Dorsolateral prefrontal cortex (tissue), 120 donors: ENCODE measurements at regions of chr2 and their contacts with region 1.

Region 1: DNA sequence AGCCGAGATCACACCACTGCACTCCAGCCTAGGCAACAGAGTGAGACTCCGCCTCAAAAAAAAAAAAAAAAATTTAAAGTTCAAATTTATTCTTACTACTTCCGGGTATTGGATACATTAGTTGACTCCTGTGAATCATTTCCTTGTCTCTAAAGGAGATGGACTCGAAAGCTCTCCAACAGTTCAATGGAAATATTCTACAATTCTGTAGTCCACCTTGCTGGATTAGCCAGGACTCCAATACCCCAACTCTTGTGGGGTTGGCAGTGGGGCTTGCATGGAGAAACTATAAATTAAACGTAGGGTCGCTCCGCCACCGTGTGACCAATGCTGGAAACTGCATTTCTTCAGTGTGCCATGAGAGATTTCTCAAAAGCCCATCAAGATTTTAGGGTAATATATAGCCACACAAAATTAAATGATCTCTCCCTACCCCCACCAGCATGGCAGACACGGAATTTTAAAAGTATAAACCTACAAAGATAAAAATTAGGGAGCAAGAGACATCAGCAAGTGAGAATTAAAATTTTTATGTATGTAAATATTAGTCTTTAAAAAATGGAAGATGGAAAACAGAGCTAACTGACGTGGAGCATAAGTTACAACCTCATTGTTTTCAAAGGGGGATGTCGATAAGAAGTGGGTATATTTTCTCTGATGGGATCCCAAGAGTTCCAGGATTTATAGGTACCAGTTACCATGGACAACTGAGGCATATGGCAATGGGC is 27.8 kb upstream of the GAREM2 start:
- DNase-seq: peak; percentile 47 to 82 (median 66)
- H3K4me3 ChIP-seq: peak overlapping the region in 10 of 59 donors; percentile 2 to 34 (median 24)
- H3K27ac ChIP-seq: peak overlapping the region in 1 of 59 donors; percentile 28
- H3K27me3 ChIP-seq: no peaks in the 10 kb centered on the region
- CTCF ChIP-seq: peak; percentile 65 to 93 (median 84)

Region 2: GRCh38 chr2:25851740-25852503 is 293.2 kb before region 1 on chr2:
- intact Hi-C with region 1: loop called in 1 of 2 experiments (anchors 10 kb)
- DNase-seq: no peak
- H3K4me3 ChIP-seq: peak overlapping the region in 31 of 59 donors; percentile 2 to 47 (median 16)
- H3K27ac ChIP-seq: peak overlapping the region in 10 of 59 donors; percentile 5 to 57 (median 20)
- H3K27me3 ChIP-seq: no peaks in the 10 kb centered on the region
- CTCF ChIP-seq: peak; percentile 37 to 86 (median 76)

Region 3: GRCh38 chr2:25885933-25886332 is 259.2 kb before region 1 on chr2:
- intact Hi-C with region 1: no loop called
- DNase-seq: no peak
- H3K4me3 ChIP-seq: no peak overlapping the region
- H3K27ac ChIP-seq: no peak overlapping the region
- H3K27me3 ChIP-seq: no peaks in the 10 kb centered on the region
- CTCF ChIP-seq: no peak

Region 4: DNA sequence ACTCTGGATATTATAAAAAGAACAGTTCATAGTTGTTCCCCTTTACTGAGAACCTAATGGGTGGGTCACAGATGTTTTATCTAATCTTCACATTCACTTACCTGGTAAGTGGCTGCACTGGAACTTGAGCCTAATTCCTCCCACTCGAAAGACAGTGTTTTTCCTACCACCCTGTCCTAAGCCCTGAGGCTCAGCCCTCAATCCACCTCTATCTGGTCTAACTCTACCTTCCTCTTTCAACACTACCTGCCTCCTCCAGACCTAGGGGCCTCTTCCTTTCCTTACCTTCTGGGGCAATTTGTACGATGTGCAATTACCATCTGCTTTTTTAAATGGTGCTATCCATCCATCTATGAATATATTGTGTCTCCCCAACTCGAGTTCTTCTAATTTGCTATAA is 153.2 kb before region 1 on chr2:
- intact Hi-C with region 1: loop called (anchors 1 to 5 kb)
- DNase-seq: no peak
- H3K4me3 ChIP-seq: peak overlapping the region in 28 of 59 donors; percentile 15 to 63 (median 50)
- H3K27ac ChIP-seq: peak overlapping the region in 7 of 59 donors; percentile 3 to 54 (median 23)
- H3K27me3 ChIP-seq: no peaks in the 10 kb centered on the region
- CTCF ChIP-seq: no peak

Region 5: DNA sequence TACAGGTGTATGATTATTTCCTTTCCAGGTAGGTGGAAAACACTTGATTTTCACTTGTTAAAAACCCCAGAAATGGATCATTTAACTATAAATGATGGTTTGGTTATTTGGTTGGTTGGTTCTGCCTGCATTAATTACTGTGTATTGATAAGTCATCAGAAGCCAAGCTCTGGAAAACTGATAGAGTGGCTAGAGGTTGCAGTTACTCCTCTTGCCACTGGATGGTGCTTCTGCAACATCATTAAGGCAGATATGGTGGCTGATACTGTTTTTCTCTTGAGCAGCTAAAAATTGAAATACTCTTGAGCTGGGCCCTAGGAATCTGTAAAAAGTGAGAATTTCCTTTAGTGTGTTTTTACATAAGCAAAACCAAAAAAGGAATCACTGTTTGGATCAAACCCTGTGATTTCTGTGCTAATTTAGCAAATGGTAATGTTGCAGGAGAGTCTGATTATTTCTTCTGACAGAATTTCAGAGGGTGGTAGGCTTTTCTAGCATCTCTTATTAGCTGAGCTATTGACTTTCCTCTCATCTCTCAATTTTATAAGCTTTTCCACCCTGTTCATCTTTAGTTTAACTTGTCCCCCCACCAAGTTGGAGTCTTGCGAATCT is 57.0 kb before region 1 on chr2:
- intact Hi-C with region 1: loop called (anchors 1 to 5 kb)
- DNase-seq: peak in 4 of 10 donors; percentile 10 to 42 (median 30)
- H3K4me3 ChIP-seq: peak overlapping the region in 1 of 59 donors; percentile 3
- H3K27ac ChIP-seq: peak overlapping the region in 44 of 59 donors; percentile 3 to 69 (median 48)
- H3K27me3 ChIP-seq: no peaks in the 10 kb centered on the region
- CTCF ChIP-seq: peak; percentile 45 to 95 (median 87)